ENCODE measurements at regions of chr13 and their contacts with region 1.

Region 1: GRCh38 chr13:51832471-51833152 is 12.4 kb downstream of the TMEM272 start:
- DNase-seq: peak; percentile 35 to 83 (median 64)
- ATAC-seq: peak; percentile 98
- H3K4me3 ChIP-seq: no peak overlapping the region
- H3K4me3 Mint-ChIP-seq: peak overlapping the region; percentile 36
- H3K27ac ChIP-seq: no peak overlapping the region
- H3K27ac Mint-ChIP-seq: peak overlapping the region; percentile 28
- H3K4me1 ChIP-seq: peaks cover 48% of the 10 kb centered on the region
- H3K4me1 Mint-ChIP-seq: peaks cover 60% of the 10 kb centered on the region
- H3K27me3 ChIP-seq: no peaks in the 10 kb centered on the region
- H3K27me3 Mint-ChIP-seq: no peaks in the 10 kb centered on the region
- CTCF ChIP-seq: peak; percentile 62

Region 2: GRCh38 chr13:51721496-51721895 is 111.1 kb before region 1 on chr13:
- CTCF ChIA-PET with region 1: no interaction called
- POLR2A ChIA-PET with region 1: no interaction called
- intact Hi-C with region 1: no loop called
- DNase-seq: no peak
- ATAC-seq: no peak
- H3K4me3 ChIP-seq: no peak overlapping the region
- H3K4me3 Mint-ChIP-seq: no peak overlapping the region
- H3K27ac ChIP-seq: no peak overlapping the region
- H3K27ac Mint-ChIP-seq: no peak overlapping the region
- H3K4me1 ChIP-seq: no peaks in the 10 kb centered on the region
- H3K4me1 Mint-ChIP-seq: no peaks in the 10 kb centered on the region
- H3K27me3 ChIP-seq: no peaks in the 10 kb centered on the region
- H3K27me3 Mint-ChIP-seq: no peaks in the 10 kb centered on the region
- CTCF ChIP-seq: no peak

Region 3: DNA sequence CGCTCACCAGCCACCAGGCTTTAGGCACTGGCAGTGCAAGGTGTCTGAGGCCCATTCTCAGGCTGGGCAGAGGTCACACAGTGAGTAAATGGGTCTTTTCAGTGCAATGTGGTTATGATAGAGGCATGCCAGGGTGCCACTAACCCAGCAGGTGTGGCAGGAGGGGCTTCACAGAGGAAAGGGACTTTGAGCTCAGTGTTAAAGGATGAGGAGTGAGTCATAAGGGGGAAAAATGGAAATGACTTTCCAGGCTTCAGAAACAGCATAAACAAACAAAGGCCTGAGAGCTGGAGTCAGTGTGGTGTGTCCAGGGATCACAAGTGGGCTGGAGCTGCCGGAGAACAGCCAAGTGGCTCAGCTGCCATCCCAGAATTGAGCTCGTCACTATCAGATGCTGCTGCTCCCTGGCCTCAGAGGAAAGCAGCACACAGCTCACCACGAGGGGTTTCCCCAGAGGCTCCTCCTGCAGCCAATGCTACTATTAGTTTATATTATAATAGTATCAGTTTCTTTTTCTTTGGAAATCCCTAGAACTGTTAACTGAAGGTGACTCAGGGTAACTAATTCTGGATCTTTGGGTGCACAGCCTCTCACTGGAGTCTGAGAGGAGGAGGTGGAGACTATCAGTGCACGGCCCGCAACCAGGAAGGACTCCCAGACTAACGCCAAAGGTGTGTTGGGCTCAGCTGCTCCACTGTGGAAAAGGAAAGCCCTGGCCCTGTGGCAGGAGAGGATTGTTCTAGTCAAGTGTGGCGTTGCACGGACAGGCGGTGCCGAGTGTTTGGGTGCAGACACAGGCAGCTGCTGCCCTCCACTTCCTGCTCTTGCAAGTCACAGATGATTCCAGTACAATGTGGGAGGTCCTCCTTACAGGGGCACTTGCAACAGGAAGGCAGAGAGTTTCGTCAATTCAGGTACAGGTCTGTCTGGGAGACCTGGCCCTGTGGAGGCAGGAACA is 68.1 kb before region 1 on chr13:
- CTCF ChIA-PET with region 1: interaction called, 5 read pairs
- POLR2A ChIA-PET with region 1: no interaction called
- intact Hi-C with region 1: loop called in 1 of 2 experiments (anchors 2 kb)
- DNase-seq: peak in 8 of 9 experiments; percentile 12 to 84 (median 48)
- ATAC-seq: peak; percentile 84
- H3K4me3 ChIP-seq: peak overlapping the region; percentile 19 to 51
- H3K4me3 Mint-ChIP-seq: peak overlapping the region; percentile 80
- H3K27ac ChIP-seq: peak overlapping the region; percentile 36 to 70
- H3K27ac Mint-ChIP-seq: peak overlapping the region; percentile 87
- H3K4me1 ChIP-seq: peaks cover 15% of the 10 kb centered on the region
- H3K4me1 Mint-ChIP-seq: peaks cover 26% of the 10 kb centered on the region
- H3K27me3 ChIP-seq: no peaks in the 10 kb centered on the region
- H3K27me3 Mint-ChIP-seq: no peaks in the 10 kb centered on the region
- CTCF ChIP-seq: no peak

Region 4: GRCh38 chr13:51814825-51815650 is 17.6 kb before region 1 on chr13:
- CTCF ChIA-PET with region 1: interaction called, 310 read pairs
- POLR2A ChIA-PET with region 1: interaction called, 143 read pairs
- intact Hi-C with region 1: loop called (anchors 1 kb)
- DNase-seq: peak; percentile 49 to 89 (median 76)
- ATAC-seq: peak; percentile 82
- H3K4me3 ChIP-seq: peak overlapping the region; percentile 12 to 23
- H3K4me3 Mint-ChIP-seq: peak overlapping the region; percentile 70
- H3K27ac ChIP-seq: peak overlapping the region in 1 of 2 experiments; percentile 18
- H3K27ac Mint-ChIP-seq: peak overlapping the region; percentile 92
- H3K4me1 ChIP-seq: peaks cover 63% of the 10 kb centered on the region
- H3K4me1 Mint-ChIP-seq: peaks cover 79% of the 10 kb centered on the region
- H3K27me3 ChIP-seq: no peaks in the 10 kb centered on the region
- H3K27me3 Mint-ChIP-seq: no peaks in the 10 kb centered on the region
- CTCF ChIP-seq: peak; percentile 92